Activated CD8-positive, alpha-beta T cell treated with anti-CD3 and anti-CD28 coated beads for 36 hours (primary cell): ENCODE measurements at regions of chr2 and their contacts with region 1.

Region 1: GRCh38 chr2:109331896-109332848 is 203.2 kb downstream of the SH3RF3 start:
- DNase-seq: peak; percentile 31
- ATAC-seq: peak; percentile 44
- H3K4me3 Mint-ChIP-seq: peak overlapping the region; percentile 55
- H3K27ac Mint-ChIP-seq: no peak overlapping the region
- H3K4me1 Mint-ChIP-seq: peaks cover 30% of the 10 kb centered on the region
- H3K27me3 Mint-ChIP-seq: no peaks in the 10 kb centered on the region
- CTCF ChIP-seq: no peak

Region 2: GRCh38 chr2:109005686-109006204 is 326.4 kb before region 1 on chr2:
- CTCF ChIA-PET with region 1: no interaction called
- POLR2A ChIA-PET with region 1: no interaction called
- intact Hi-C with region 1: no loop called
- DNase-seq: no peak
- ATAC-seq: no peak
- H3K4me3 Mint-ChIP-seq: no peak overlapping the region
- H3K27ac Mint-ChIP-seq: no peak overlapping the region
- H3K4me1 Mint-ChIP-seq: peaks cover 12% of the 10 kb centered on the region
- H3K27me3 Mint-ChIP-seq: no peaks in the 10 kb centered on the region
- CTCF ChIP-seq: no peak

Region 3: GRCh38 chr2:109031476-109032228 is 300.5 kb before region 1 on chr2:
- CTCF ChIA-PET with region 1: no interaction called
- POLR2A ChIA-PET with region 1: no interaction called
- intact Hi-C with region 1: no loop called
- DNase-seq: peak; percentile 84
- ATAC-seq: peak; percentile 80
- H3K4me3 Mint-ChIP-seq: peak overlapping the region; percentile 82
- H3K27ac Mint-ChIP-seq: peak overlapping the region; percentile 93
- H3K4me1 Mint-ChIP-seq: peaks cover 57% of the 10 kb centered on the region
- H3K27me3 Mint-ChIP-seq: no peaks in the 10 kb centered on the region
- CTCF ChIP-seq: no peak

Region 4: DNA sequence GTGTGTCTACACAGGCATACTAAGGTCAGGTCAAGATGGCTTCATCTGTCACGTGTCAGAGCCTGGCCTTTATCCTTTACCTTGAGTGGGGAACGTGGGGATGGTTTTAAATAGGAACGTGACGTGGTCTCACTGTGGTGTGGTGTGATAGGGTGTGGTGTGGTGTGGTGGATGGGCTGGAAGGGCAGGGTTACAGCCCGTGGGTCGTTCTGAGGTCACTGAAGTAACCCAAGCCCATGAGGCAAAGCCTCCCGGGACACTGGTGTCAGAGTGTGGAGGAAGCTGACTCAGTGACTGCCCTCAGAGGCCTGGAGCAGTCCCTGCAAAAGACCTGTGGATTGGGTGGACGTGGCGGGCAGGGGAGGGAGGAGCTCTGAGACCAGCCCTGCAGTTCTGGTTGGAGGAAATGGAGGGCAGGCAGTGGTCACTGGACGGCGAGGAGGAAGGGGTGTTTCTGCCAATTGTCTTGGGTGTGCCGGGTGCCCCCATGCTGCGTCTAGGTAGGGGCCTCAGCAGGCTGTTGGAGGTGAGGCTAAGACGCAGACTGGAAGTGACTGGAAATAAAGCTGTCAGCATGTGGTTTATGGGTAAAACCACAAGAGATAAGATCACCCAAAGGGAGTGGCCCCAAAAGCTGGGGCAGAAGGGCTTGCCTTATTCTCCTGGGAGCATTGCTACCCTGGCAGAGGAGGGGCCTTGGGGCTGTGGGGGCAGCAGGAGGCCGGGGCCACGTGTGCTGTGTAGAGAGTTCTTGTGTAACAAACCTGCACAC is 118.3 kb before region 1 on chr2:
- CTCF ChIA-PET with region 1: no interaction called
- POLR2A ChIA-PET with region 1: no interaction called
- intact Hi-C with region 1: loop called (anchors 10 kb)
- DNase-seq: peak; percentile 81
- ATAC-seq: peak; percentile 76
- H3K4me3 Mint-ChIP-seq: peak overlapping the region; percentile 56
- H3K27ac Mint-ChIP-seq: peak overlapping the region; percentile 84
- H3K4me1 Mint-ChIP-seq: peaks cover 73% of the 10 kb centered on the region
- H3K27me3 Mint-ChIP-seq: peaks cover 59% of the 10 kb centered on the region
- CTCF ChIP-seq: no peak